Kidney (tissue), 22 donors: ENCODE measurements at regions of chr1 and their contacts with region 1.

Region 1: GRCh38 chr1:234610348-234611152 is 572 bp upstream of the IRF2BP2 start:
- DNase-seq: peak; percentile 96 to 99 (median 97)
- H3K4me3 ChIP-seq: peak overlapping the region; percentile 81 to 97 (median 89)
- H3K27ac ChIP-seq: peak overlapping the region; percentile 100
- H3K4me1 ChIP-seq: peaks cover 23 to 29% (median 28%) of the 10 kb centered on the region in 3 donors
- H3K27me3 ChIP-seq: no peaks in the 10 kb centered on the region
- CTCF ChIP-seq: peak; percentile 11

Region 2: DNA sequence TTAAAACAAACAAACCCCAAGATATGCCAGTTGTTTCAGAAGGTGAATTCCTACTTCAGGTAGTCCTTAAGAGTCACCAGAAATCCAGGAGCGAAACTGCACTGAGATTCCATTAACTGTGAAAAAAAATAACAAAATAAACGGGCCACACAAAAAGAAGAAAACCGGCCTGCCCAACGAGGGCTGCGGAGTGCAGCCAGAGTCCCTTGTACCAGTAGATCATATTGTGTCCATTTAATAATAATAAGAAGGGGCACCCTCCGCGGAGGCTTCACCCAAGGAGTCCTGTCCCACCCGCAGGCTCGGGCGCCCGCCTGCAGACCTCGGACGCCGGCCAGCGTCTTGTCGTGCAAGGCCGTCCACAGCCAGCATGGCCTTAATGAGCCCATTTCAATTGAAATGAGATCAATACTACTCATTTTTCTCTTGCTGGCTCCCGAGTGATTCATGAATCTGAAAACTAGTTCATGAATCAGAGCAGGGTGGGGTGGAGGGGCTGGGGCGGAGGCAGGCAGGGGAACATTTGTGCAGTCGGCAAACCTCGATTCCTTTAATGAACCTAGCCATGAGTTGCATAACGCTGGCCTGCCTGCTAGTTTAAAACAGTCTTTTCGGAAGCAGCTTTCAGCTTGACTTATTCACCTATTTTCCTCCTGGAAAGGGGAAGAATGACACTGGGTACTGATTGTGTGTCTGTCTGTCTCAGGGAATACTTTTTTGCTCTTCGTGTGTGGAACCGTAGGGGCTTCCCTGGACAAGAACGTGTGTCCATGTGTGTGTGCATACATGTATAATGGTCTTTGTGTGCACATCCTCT is 112.6 kb after region 1 on chr1:
- intact Hi-C with region 1: loop called (anchors 10 kb)
- DNase-seq: peak in 1 of 5 donors; percentile 89
- H3K4me3 ChIP-seq: peak overlapping the region; percentile 15 to 36 (median 17)
- H3K27ac ChIP-seq: peak overlapping the region; percentile 98 to 99
- H3K4me1 ChIP-seq: peaks cover 57 to 92% (median 83%) of the 10 kb centered on the region in 3 donors
- H3K27me3 ChIP-seq: no peaks in the 10 kb centered on the region
- CTCF ChIP-seq: no peak

Region 3: GRCh38 chr1:234743791-234744611 is 133.5 kb after region 1 on chr1:
- intact Hi-C with region 1: no loop called
- DNase-seq: peak in 4 of 5 donors; percentile 72 to 93 (median 85)
- H3K4me3 ChIP-seq: peak overlapping the region in 2 of 3 donors; percentile 26 to 31
- H3K27ac ChIP-seq: peak overlapping the region in 1 of 2 donors; percentile 10
- H3K4me1 ChIP-seq: peaks cover 0 to 9% (median 5%) of the 10 kb centered on the region in 3 donors
- H3K27me3 ChIP-seq: no peaks in the 10 kb centered on the region
- CTCF ChIP-seq: no peak

Region 4: DNA sequence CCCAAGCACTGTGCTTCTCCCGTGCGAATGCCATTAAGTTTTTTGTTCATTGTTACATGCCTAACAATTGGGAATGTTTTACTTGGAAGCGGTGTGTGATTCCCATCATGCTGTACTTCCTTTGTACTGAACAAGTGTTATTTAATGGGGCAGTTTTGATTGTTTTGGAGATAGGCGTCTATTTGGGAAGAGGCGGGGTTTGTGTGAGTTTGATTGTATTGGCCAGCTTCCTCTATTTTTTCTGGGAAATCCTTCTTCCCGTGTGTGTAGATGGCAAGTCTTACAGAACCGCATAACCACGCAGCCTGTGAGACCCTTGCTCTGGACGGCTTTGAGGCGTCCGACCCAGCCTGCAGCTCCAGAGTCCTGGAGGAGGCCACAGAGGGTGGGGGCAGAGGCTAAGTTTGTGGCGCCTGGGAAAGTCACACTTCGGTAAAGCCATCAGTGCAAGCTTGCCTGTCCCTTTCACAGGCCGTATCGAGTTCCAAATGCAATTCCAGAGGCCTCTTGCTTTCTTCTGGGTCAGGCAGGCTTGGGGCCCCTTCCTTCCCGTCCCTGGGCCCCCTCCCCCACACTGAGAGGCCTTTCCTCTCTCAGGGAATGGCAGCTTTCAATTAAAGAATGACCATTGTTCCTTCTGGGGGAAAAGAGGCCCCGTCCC is 307.8 kb after region 1 on chr1:
- intact Hi-C with region 1: loop called (anchors 10 kb)
- DNase-seq: peak in 4 of 5 donors; percentile 88 to 93 (median 90)
- H3K4me3 ChIP-seq: no peak overlapping the region
- H3K27ac ChIP-seq: peak overlapping the region; percentile 83 to 86
- H3K4me1 ChIP-seq: peaks cover 5 to 33% (median 30%) of the 10 kb centered on the region in 3 donors
- H3K27me3 ChIP-seq: no peaks in the 10 kb centered on the region
- CTCF ChIP-seq: no peak

Region 5: GRCh38 chr1:234978397-234979295 is 368.1 kb after region 1 on chr1:
- intact Hi-C with region 1: loop called (anchors 10 kb)
- DNase-seq: peak in 2 of 5 donors; percentile 59 to 60
- H3K4me3 ChIP-seq: no peak overlapping the region
- H3K27ac ChIP-seq: peak overlapping the region; percentile 89 to 90
- H3K4me1 ChIP-seq: peaks cover 14 to 73% (median 44%) of the 10 kb centered on the region in 3 donors
- H3K27me3 ChIP-seq: no peaks in the 10 kb centered on the region
- CTCF ChIP-seq: peak; percentile 6